Left cardiac atrium (tissue), 4 donors: ENCODE measurements at regions of chr5 and their contacts with region 1.

Region 1: DNA sequence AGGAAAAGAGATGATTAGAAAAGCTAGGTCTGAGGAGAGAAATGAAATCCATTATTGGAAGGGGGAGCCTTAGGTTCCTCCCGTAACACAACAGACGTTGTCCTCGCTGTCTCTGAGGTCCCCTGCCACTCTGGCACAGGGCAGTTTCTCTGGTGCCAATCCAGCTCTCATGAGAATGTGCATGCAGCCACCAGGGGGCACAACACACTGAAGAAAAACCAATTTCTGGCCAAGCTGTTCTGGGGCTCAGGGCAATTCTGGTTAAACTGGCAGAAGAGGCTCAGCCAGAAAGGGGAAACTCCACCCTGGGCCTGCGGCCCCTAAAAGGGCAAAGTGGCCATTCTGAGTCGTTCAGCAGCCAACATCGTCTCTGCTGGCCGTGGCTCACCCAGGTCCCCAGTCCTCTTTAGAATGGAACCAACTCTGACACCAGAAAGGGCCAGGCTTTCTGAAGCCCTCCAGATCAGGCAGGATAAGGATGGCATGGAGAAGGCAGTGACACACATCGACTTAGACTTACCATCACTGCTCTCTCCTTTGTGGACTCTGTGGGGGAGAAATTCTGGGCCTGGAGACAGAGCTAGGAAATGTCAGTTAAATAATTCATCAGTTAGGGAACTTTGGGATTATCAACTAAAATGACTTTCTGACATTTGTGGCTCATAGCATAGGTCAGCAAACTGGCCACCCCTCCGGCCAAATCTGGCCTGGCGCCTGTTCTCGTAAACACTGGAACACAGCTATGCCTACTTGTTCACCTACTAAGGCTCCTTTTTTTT is 58.5 kb upstream of the GOLPH3 start:
- DNase-seq: peak; percentile 83
- ATAC-seq: peak; percentile 85 to 93

Region 2: DNA sequence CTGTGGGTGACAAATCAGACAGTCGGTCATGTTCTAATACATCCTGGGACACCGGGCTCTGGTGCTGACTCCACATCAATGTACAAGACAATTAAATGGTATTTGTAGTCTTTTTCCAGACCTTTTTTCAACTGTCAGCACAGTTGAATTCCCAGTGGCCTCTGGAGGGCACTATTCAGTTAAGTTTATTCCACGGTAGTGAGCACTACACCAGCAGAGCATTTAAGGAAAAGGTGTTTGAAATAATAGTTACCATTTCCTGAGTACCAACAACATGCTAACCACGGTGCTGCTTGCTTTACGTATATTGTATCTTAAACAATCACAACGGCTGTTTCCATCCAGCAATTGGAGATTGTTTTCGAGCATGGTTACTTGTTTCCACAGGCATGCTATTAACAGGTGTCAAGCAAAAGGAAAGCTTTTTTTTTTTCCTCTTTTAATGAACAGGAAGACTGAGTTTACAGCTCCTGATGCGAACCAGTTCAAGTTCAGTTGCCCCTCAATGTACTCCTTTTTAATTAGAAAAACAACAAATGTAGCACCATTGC is 407.0 kb before region 1 on chr5:
- intact Hi-C with region 1: no loop called
- DNase-seq: peak; percentile 47
- ATAC-seq: peak; percentile 85 to 88

Region 3: GRCh38 chr5:32174011-32174870 is 58.4 kb before region 1 on chr5 and contains the start of gene GOLPH3:
- intact Hi-C with region 1: loop called in 1 of 2 experiments (anchors 5 kb)
- DNase-seq: peak; percentile 98
- ATAC-seq: peak; percentile 97
- total RNA-seq, gene GOLPH3: 48.0 to 72.2 TPM

Region 4: GRCh38 chr5:32329308-32329834 is 96.7 kb after region 1 on chr5:
- intact Hi-C with region 1: loop called (anchors 2 to 5 kb)
- DNase-seq: peak; percentile 67
- ATAC-seq: peak; percentile 93 to 94